ENCODE measurements at regions of chr1 and their contacts with region 1.

Region 1: GRCh38 chr1:51192213-51192843 is 43.7 kb upstream of the RNF11 start:
- DNase-seq: peak; percentile 78
- ATAC-seq: peak; percentile 45
- H3K4me3 Mint-ChIP-seq: no peak overlapping the region
- H3K27ac Mint-ChIP-seq: no peak overlapping the region
- H3K4me1 Mint-ChIP-seq: no peaks in the 10 kb centered on the region
- H3K27me3 Mint-ChIP-seq: peaks cover 4% of the 10 kb centered on the region
- CTCF ChIP-seq: peak; percentile 91

Region 2: DNA sequence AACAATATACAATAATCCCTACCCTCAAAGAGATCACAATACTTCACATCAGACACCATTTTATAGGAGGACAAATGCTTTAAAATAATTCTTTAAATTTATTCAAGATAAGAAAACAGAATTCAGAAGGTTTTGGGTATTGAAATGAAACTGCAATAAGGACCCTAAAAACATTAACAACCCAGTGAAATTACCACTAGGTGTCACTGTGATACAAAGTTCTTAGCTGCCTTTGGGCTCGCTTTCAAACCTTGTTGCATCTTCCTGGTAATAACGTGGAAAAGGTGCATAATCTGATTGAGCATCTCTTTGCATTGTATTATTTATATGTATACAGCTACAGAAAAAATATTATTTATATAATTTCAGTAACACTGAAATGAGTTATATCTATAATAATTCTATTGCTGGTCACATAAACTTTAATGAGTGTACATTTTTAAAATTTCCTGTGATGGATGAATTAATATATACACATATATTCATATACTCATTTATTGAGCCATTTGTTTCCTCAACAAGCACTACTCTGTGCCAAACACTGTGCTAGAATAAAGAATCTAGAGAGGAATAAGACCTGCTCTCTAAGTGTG is 417.5 kb before region 1 on chr1:
- CTCF ChIA-PET with region 1: interaction called, 60 read pairs
- POLR2A ChIA-PET with region 1: no interaction called
- intact Hi-C with region 1: loop called (anchors 2 kb)
- DNase-seq: no peak
- ATAC-seq: no peak
- H3K4me3 Mint-ChIP-seq: no peak overlapping the region
- H3K27ac Mint-ChIP-seq: no peak overlapping the region
- H3K4me1 Mint-ChIP-seq: no peaks in the 10 kb centered on the region
- H3K27me3 Mint-ChIP-seq: no peaks in the 10 kb centered on the region
- CTCF ChIP-seq: peak; percentile 78

Region 3: GRCh38 chr1:50929376-50929958 is 262.9 kb before region 1 on chr1:
- CTCF ChIA-PET with region 1: interaction called, 18 read pairs
- POLR2A ChIA-PET with region 1: no interaction called
- intact Hi-C with region 1: no loop called
- DNase-seq: no peak
- ATAC-seq: no peak
- H3K4me3 Mint-ChIP-seq: no peak overlapping the region
- H3K27ac Mint-ChIP-seq: no peak overlapping the region
- H3K4me1 Mint-ChIP-seq: peaks cover 39% of the 10 kb centered on the region
- H3K27me3 Mint-ChIP-seq: no peaks in the 10 kb centered on the region
- CTCF ChIP-seq: peak; percentile 70

Region 4: DNA sequence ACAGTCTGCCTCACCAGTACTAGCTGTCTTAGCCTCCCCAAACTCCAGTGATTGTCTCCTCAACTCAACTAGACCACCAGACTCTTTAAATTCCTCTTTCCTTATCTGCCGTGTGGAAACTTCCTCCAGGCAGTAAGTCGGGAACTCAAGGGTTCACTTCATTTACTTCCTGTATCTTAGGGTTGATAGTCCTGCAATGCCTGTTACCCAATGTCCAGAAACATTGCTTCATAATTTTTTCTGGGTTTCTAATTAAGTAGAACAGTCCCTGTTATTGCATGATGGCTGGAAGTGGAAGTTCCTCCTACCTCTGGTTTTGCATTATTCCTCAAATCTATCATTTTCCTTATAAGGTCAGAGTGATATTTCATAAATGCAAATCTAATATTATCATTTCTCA is 17.1 kb before region 1 on chr1:
- CTCF ChIA-PET with region 1: interaction called, 42 read pairs
- POLR2A ChIA-PET with region 1: no interaction called
- intact Hi-C with region 1: no loop called
- DNase-seq: no peak
- ATAC-seq: no peak
- H3K4me3 Mint-ChIP-seq: no peak overlapping the region
- H3K27ac Mint-ChIP-seq: no peak overlapping the region
- H3K4me1 Mint-ChIP-seq: peaks cover 6% of the 10 kb centered on the region
- H3K27me3 Mint-ChIP-seq: peaks cover 19% of the 10 kb centered on the region
- CTCF ChIP-seq: no peak

Region 5: DNA sequence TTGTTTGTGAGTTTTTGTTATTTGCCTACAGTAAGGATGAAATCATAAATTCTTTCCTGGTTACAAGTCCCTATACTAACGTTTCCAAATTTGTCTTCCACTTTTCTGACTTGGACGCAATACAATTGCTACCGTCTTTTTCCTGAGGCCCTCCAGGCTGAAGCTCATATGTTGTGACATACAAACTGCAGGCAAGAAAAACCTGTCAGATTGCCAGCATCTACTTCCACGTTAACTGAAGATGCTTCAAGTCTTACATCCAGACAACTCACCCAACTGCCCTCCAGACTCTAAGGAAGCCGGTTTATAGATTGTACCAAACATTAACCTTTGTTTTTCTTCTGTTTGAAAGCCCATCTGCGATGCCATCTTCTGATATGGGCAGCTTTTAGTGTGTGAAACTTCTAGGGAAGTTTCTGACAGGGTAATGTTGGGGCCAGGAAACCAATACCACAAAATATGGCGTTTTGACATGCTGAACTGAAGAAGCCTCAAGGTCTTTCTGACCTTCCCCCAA is 22.3 kb after region 1 on chr1:
- CTCF ChIA-PET with region 1: interaction called, 10 read pairs
- POLR2A ChIA-PET with region 1: no interaction called
- intact Hi-C with region 1: no loop called
- DNase-seq: peak; percentile 16
- ATAC-seq: peak; percentile 65
- H3K4me3 Mint-ChIP-seq: no peak overlapping the region
- H3K27ac Mint-ChIP-seq: peak overlapping the region; percentile 57
- H3K4me1 Mint-ChIP-seq: peaks cover 18% of the 10 kb centered on the region
- H3K27me3 Mint-ChIP-seq: no peaks in the 10 kb centered on the region
- CTCF ChIP-seq: no peak

Region 6: GRCh38 chr1:51296383-51297357 is 104.3 kb after region 1 on chr1:
- CTCF ChIA-PET with region 1: interaction called, 63 read pairs
- POLR2A ChIA-PET with region 1: no interaction called
- intact Hi-C with region 1: no loop called
- DNase-seq: peak; percentile 85
- ATAC-seq: peak; percentile 86
- H3K4me3 Mint-ChIP-seq: peak overlapping the region; percentile 65
- H3K27ac Mint-ChIP-seq: peak overlapping the region; percentile 49
- H3K4me1 Mint-ChIP-seq: peaks cover 28% of the 10 kb centered on the region
- H3K27me3 Mint-ChIP-seq: no peaks in the 10 kb centered on the region
- CTCF ChIP-seq: peak; percentile 95

Region 7: GRCh38 chr1:51564124-51564523 is 371.8 kb after region 1 on chr1:
- CTCF ChIA-PET with region 1: no interaction called
- POLR2A ChIA-PET with region 1: no interaction called
- intact Hi-C with region 1: no loop called
- DNase-seq: peak; percentile 50
- ATAC-seq: peak; percentile 69
- H3K4me3 Mint-ChIP-seq: no peak overlapping the region
- H3K27ac Mint-ChIP-seq: no peak overlapping the region
- H3K4me1 Mint-ChIP-seq: peaks cover 21% of the 10 kb centered on the region
- H3K27me3 Mint-ChIP-seq: no peaks in the 10 kb centered on the region
- CTCF ChIP-seq: no peak